ENCODE measurements at regions of chr6 and their contacts with region 1.

Region 1: GRCh38 chr6:71294121-71294523 is 5.5 kb downstream of the OGFRL1 start:
- DNase-seq: no peak
- ATAC-seq: peak in 5 of 8 donors; percentile 22 to 77 (median 46)
- H3K4me3 ChIP-seq: no peak overlapping the region
- H3K27ac ChIP-seq: peak overlapping the region in 2 of 10 donors; percentile 16 to 17
- H3K4me1 ChIP-seq: peaks cover 0 to 49% (median 31%) of the 10 kb centered on the region in 9 donors
- H3K27me3 ChIP-seq: no peaks in the 10 kb centered on the region
- CTCF ChIP-seq: no peak

Region 2: GRCh38 chr6:71334768-71335167 is 40.6 kb after region 1 on chr6:
- intact Hi-C with region 1: loop called in 1 of 10 experiments (anchors 5 kb)
- DNase-seq: no peak
- ATAC-seq: no peak
- H3K4me3 ChIP-seq: no peak overlapping the region
- H3K27ac ChIP-seq: no peak overlapping the region
- H3K4me1 ChIP-seq: peaks cover 0 to 12% (median 0%) of the 10 kb centered on the region in 9 donors
- H3K27me3 ChIP-seq: no peaks in the 10 kb centered on the region
- CTCF ChIP-seq: no peak

Region 3: DNA sequence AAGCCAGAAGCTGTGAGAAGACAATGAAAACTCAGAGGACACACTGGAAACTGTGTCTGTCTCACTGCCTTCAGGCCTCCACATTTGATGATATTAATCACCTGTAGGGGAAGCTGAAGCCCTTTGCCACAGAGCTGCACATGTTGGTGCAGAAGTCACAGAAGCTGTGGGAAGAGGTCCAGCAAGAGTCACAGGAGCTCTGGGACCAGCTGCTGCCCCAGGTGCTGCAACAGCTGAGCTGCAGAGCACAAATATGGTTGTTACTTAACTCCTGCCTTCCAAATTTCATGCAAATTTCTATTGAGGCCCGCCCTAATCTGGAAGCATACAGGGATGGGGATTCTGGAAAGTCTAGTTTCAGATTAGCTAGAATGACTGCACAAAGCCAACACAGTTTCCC is 163.8 kb after region 1 on chr6:
- intact Hi-C with region 1: no loop called
- DNase-seq: no peak
- ATAC-seq: no peak
- H3K4me3 ChIP-seq: no peak overlapping the region
- H3K27ac ChIP-seq: no peak overlapping the region
- H3K4me1 ChIP-seq: no peaks in the 10 kb centered on the region
- H3K27me3 ChIP-seq: no peaks in the 10 kb centered on the region
- CTCF ChIP-seq: peak in 1 of 9 donors; percentile 12

Region 4: GRCh38 chr6:71808865-71809264 is 514.7 kb after region 1 on chr6:
- intact Hi-C with region 1: no loop called
- DNase-seq: no peak
- ATAC-seq: no peak
- H3K4me3 ChIP-seq: no peak overlapping the region
- H3K27ac ChIP-seq: no peak overlapping the region
- H3K4me1 ChIP-seq: no peaks in the 10 kb centered on the region
- H3K27me3 ChIP-seq: no peaks in the 10 kb centered on the region
- CTCF ChIP-seq: no peak